PC-9 (cell line): ENCODE measurements at regions of chr12 and their contacts with region 1.

Region 1: GRCh38 chr12:1277905-1278304 is 286.9 kb downstream of the ERC1 start:
- DNase-seq: no peak
- H3K4me3 ChIP-seq: no peak overlapping the region
- H3K27ac ChIP-seq: no peak overlapping the region
- H3K4me1 ChIP-seq: no peaks in the 10 kb centered on the region
- H3K27me3 ChIP-seq: no peaks in the 10 kb centered on the region
- CTCF ChIP-seq: no peak

Region 2: DNA sequence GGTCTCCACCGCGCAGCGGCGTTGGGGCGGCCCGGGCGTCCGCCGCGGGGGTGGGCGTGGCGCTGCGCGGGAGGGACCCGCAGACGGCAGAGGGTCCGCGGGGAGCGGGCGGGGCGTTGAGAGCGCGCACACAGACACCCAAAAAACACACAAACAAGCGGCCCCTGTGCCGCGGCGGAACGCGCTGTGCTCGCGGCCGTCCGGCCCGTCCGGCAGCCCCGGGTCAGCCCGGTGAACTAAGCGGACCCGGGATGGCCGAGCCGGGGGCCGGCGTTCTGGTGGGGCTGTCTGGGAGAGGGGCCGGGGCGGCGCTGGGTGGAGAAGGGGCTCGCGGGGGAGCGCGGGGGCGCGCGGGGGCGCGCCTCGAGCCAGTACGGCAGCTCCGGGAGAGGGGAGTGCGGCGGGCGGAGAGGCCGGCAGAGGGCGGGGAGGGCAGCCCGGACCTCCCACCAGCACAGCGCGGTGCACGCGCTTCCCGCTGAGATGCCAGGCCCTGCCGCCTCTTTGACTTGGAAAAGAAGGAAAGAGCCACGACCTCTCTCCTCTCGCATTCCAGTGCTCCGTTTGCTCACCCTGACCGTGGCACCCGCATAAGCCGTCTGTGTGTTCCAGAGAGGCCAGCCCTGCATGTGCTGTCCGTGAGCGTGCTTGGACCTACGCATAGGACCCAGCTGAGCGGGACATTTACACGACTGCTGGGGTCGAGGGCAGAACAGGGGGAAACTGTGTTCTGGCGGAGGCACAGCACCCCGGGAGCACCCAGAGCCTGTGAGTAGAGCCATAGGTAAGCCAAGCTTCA is 1074.2 kb before region 1 on chr12:
- CTCF ChIA-PET with region 1: no interaction called
- POLR2A ChIA-PET with region 1: no interaction called
- intact Hi-C with region 1: no loop called
- DNase-seq: no peak
- H3K4me3 ChIP-seq: no peak overlapping the region
- H3K27ac ChIP-seq: no peak overlapping the region
- H3K4me1 ChIP-seq: no peaks in the 10 kb centered on the region
- H3K27me3 ChIP-seq: peaks cover 62% of the 10 kb centered on the region
- CTCF ChIP-seq: no peak

Region 3: DNA sequence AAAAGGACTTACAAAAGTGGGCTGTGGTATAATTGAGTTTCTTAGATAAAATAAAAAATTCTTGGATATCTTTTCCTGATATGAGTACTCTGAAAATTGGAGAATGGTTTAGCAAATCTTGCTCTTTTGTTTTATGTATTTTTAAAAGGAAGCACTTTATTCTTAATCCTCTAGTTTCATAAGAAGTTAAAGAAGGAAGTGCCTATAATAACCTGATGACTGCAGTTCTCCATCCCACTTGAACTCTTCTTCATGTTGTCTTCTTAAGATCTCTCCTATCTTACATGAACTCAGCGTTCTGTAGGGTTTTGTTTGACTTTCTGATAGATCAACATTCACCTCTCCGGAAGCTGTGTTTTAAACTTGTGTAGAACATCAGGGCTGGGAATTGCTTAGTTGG is 15.9 kb before region 1 on chr12:
- CTCF ChIA-PET with region 1: interaction called, 3 read pairs
- POLR2A ChIA-PET with region 1: no interaction called
- intact Hi-C with region 1: loop called (anchors 2 kb)
- DNase-seq: no peak
- H3K4me3 ChIP-seq: no peak overlapping the region
- H3K27ac ChIP-seq: no peak overlapping the region
- H3K4me1 ChIP-seq: no peaks in the 10 kb centered on the region
- H3K27me3 ChIP-seq: no peaks in the 10 kb centered on the region
- CTCF ChIP-seq: no peak